GM12878 (cell line): ENCODE measurements at regions of chr5 and their contacts with region 1.

Region 1: DNA sequence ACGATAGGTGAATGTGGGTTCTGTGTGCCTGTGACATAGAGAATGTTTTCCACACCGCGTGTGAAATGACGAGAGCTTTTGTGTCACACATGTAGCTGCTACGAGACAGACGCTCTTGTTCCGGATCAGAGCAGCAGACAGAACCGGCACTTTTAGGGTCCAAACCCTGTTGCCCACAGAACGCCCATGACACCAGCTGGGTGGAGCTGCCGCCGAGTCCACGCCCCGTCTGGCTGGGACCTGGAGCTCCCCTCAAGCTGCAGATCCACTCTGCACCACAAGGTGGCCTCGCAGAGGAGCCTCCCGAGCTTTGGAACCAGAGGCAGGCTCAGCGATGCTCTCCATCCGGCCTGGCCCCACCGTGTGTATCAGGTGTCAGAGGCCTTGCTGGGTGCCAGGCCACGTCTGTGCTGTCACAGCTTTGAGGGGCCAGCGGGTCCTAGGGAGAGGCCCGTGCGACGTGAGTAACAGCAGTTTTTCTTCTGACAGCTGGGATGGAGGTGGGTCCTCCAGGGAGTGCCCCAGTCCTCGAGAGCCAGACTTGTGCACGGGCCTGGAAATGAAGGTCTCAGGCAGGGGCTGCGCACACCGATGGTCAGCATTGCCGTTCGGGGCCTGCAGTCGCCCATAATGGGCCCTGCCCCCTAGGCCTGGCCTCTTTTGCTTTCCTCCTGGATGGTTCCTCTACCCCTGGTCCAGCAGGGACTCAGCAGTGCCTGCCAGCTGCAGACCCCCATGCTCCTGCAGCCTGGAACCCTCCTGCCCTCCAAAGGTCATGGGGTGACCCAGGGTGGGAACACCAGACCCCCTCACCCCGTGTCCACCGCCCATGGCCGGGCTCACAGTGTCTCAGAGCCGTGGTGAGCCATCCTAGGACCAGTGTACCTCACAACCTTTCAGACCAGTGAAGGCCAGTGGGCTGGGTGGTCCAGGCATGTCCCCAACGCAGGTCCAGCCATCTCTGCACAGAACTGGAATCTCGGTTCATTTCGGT is 2.5 kb upstream of the LRRC14B start:
- DNase-seq: peak; percentile 28
- ATAC-seq: peak; percentile 95
- H3K4me3 ChIP-seq: no peak overlapping the region
- H3K27ac ChIP-seq: no peak overlapping the region
- H3K4me1 ChIP-seq: peaks cover 32% of the 10 kb centered on the region
- H3K27me3 ChIP-seq: no peaks in the 10 kb centered on the region; a peak in 2 of 4 replicates
- CTCF ChIP-seq: peak; percentile 85 to 97 (median 95)
- EP300 ChIP-seq: no peak
- POLR2A ChIP-seq: no peak
- RAD21 ChIP-seq: peak; percentile 70

Region 2: GRCh38 chr5:217860-218456 is 29.2 kb after region 1 on chr5 and contains the starts of genes CCDC127 and SDHA:
- CTCF ChIA-PET with region 1: interaction called, 13 read pairs
- POLR2A ChIA-PET with region 1: interaction called, 4 read pairs
- RAD21 ChIA-PET with region 1: interaction called, 6 read pairs
- SMC1A ChIA-PET with region 1: interaction called, 9 read pairs
- in situ Hi-C with region 1: no loop called
- intact Hi-C with region 1: no loop called
- DNase-seq: peak; percentile 86
- ATAC-seq: peak; percentile 84
- H3K4me3 ChIP-seq: peak within 1 kb of the TSS; percentile 98
- H3K27ac ChIP-seq: peak within 1 kb of the TSS; percentile 69
- H3K4me1 ChIP-seq: peaks cover 7% of the 10 kb centered on the region
- H3K27me3 ChIP-seq: no peaks in the 10 kb centered on the region
- CTCF ChIP-seq: peak; percentile 30 to 39 (median 34); a peak in 5 of 6 replicates
- EP300 ChIP-seq: no peak
- POLR2A ChIP-seq: peak; percentile 87
- RAD21 ChIP-seq: no peak
- polyA plus RNA-seq, gene CCDC127: 2.8 to 3.8 TPM
- polyA plus RNA-seq, gene SDHA: 63.3 to 122 TPM

Region 3: DNA sequence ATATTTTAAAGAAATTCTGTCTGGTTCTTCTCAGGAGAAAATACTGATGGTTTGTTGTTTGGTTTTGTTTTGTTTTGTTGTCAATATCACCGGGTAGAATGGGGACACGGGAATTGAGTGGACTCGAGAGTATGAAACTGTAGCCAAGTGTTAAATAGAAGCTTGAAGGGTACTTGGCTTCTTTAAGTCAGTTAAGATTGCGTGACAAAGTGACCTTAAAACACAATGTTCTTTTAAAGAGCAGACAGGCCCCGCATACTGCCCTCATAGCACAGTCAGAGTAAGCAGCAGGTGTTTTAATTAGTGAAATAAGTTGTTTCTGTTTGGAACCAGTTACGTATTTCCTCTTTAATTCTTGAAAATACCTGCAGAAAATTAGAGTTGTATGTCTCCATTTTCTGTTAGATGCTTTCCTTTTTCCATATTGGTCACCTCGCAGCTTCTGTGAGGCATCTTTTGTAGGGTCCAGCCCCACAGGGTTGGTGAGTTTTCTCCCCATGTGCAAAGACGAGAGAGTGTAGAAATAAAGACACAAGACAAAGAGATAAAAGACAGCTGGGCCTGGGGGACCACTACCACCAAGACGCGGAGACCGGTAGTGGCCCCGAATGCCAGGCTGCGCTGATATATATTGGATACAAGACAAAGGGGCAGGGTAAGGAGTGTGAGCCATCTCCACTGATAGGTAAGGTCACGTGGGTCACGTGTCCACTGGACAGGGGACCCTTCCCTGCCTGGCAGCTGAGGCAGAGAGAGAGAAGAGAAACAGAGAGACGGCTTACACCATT is 713.5 kb after region 1 on chr5:
- CTCF ChIA-PET with region 1: interaction called, 17 read pairs
- POLR2A ChIA-PET with region 1: no interaction called
- RAD21 ChIA-PET with region 1: interaction called, 3 read pairs
- SMC1A ChIA-PET with region 1: interaction called, 6 read pairs
- in situ Hi-C with region 1: no loop called
- intact Hi-C with region 1: no loop called
- DNase-seq: no peak
- ATAC-seq: no peak
- H3K4me3 ChIP-seq: no peak overlapping the region
- H3K27ac ChIP-seq: no peak overlapping the region
- H3K4me1 ChIP-seq: no peaks in the 10 kb centered on the region
- H3K27me3 ChIP-seq: no peaks in the 10 kb centered on the region
- CTCF ChIP-seq: no peak
- EP300 ChIP-seq: no peak
- POLR2A ChIP-seq: no peak
- RAD21 ChIP-seq: no peak